Mammary epithelial cell (primary cell): ENCODE measurements at regions of chr6 and their contacts with region 1.

Region 1: GRCh38 chr6:136967876-136968752 is 46.0 kb downstream of the SLC35D3 start:
- DNase-seq: peak; percentile 64
- H3K4me3 ChIP-seq: no peak overlapping the region
- H3K27ac ChIP-seq: no peak overlapping the region
- H3K4me1 ChIP-seq: no peaks in the 10 kb centered on the region
- H3K27me3 ChIP-seq: no peaks in the 10 kb centered on the region
- CTCF ChIP-seq: peak; percentile 54 to 76

Region 2: GRCh38 chr6:136846046-136846445 is 122.1 kb before region 1 on chr6:
- CTCF ChIA-PET with region 1: no interaction called
- dilution Hi-C with region 1: no loop called
- in situ Hi-C with region 1: no loop called
- intact Hi-C with region 1: loop called (anchors 2 kb)
- DNase-seq: peak; percentile 29
- H3K4me3 ChIP-seq: no peak overlapping the region
- H3K27ac ChIP-seq: no peak overlapping the region
- H3K4me1 ChIP-seq: no peaks in the 10 kb centered on the region
- H3K27me3 ChIP-seq: no peaks in the 10 kb centered on the region
- CTCF ChIP-seq: peak; percentile 80 to 81

Region 3: GRCh38 chr6:137013738-137014602 is 45.9 kb after region 1 on chr6:
- CTCF ChIA-PET with region 1: interaction called, 3 read pairs
- dilution Hi-C with region 1: no loop called
- in situ Hi-C with region 1: loop called in 1 of 2 experiments (anchors 5 kb)
- intact Hi-C with region 1: loop called (anchors 1 kb)
- DNase-seq: peak; percentile 71
- H3K4me3 ChIP-seq: no peak overlapping the region
- H3K27ac ChIP-seq: no peak overlapping the region
- H3K4me1 ChIP-seq: peaks cover 13% of the 10 kb centered on the region
- H3K27me3 ChIP-seq: peaks cover 4% of the 10 kb centered on the region
- CTCF ChIP-seq: peak; percentile 66 to 85

Region 4: DNA sequence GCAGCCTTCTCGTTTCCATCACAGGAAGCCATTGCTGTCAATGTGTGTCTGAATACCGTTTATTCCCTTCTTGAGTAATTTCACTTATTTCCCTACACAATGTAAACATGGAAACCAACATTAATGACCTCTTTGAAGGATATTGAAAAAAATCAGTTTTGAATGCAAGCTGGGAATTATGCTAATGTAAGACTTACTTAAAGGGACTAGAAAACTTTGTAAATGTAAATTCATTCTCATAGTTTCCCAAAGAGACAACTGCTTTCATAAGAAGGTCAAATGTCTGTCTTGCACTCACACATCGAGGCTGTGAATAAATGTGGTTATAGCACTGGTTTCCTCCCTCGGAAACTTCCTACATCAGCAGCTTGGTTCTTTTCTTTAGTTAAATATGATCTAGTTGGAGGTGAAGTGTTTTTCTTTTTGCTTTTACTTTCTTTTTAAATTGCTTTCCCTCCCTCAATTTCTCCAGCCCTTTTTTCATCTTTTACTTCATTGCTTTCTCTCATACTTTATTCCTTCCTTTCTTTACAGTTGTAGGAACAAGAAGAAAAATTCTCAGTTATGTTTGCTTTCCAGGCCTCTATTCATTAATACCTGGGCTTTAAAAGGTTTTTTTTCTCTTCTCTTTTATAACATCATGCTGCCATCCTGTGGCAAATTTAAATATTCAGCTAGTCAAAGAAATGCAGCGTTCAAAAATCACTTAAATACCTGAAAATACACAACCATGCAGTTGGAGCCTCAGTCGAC is 1007.2 kb after region 1 on chr6:
- CTCF ChIA-PET with region 1: no interaction called
- dilution Hi-C with region 1: no loop called
- in situ Hi-C with region 1: no loop called
- intact Hi-C with region 1: loop called (anchors 5 kb)
- DNase-seq: no peak
- H3K4me3 ChIP-seq: no peak overlapping the region
- H3K27ac ChIP-seq: no peak overlapping the region
- H3K4me1 ChIP-seq: peaks cover 4% of the 10 kb centered on the region
- H3K27me3 ChIP-seq: no peaks in the 10 kb centered on the region
- CTCF ChIP-seq: peak; percentile 31 to 43